ENCODE measurements at regions of chr11 and their contacts with region 1.

Region 1: GRCh38 chr11:108654994-108655631 is 9.8 kb upstream of the DDX10 start:
- DNase-seq: peak; percentile 74
- H3K4me3 Mint-ChIP-seq: no peak overlapping the region
- H3K27ac Mint-ChIP-seq: no peak overlapping the region
- H3K4me1 Mint-ChIP-seq: no peaks in the 10 kb centered on the region
- H3K27me3 Mint-ChIP-seq: no peaks in the 10 kb centered on the region
- CTCF ChIP-seq: peak; percentile 79

Region 2: DNA sequence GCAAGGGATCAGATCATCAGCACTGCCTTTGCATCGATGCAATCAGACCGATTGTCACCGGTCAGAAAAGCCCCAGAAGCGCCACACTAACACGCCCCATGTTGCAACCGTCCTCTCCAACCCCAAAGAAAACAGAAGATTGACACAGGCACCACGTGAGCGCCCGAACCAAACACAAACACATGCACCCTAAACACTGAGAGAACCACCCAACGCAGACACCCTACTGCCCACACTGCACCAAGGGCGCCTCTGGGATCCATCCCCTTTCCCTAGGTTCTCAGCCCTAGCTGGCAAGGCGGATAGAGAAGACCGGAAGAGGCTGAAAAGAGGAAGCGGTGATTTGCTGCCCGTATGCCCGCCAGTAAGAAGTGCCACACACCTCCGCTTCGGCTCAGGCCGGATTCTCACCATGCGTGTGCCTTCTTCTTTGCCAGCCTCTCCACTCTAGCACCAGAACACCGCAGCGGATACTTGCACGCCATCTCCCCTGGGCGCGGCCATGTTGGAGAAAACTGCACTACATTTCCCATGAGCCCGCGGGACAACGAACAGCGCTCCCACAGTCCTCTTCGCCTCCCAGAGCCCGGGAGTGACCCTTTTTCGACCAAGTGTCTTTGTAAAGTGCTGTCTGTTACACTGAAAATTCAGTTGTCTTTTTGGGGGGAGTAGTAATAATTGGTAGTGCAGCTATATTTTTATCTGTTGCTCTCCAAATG is 1089.7 kb before region 1 on chr11 and contains the start of gene ALKBH8:
- CTCF ChIA-PET with region 1: no interaction called
- POLR2A ChIA-PET with region 1: no interaction called
- intact Hi-C with region 1: loop called (anchors 5 kb)
- DNase-seq: peak; percentile 72
- H3K4me3 Mint-ChIP-seq: peak within 1 kb of the TSS; percentile 83
- H3K27ac Mint-ChIP-seq: peak within 1 kb of the TSS; percentile 82
- H3K4me1 Mint-ChIP-seq: peaks cover 23% of the 10 kb centered on the region
- H3K27me3 Mint-ChIP-seq: no peaks in the 10 kb centered on the region
- CTCF ChIP-seq: no peak
- total RNA-seq, gene ALKBH8: 5.1 and 7.3 TPM in 2 replicates

Region 3: GRCh38 chr11:107999759-108000455 is 655.2 kb before region 1 on chr11:
- CTCF ChIA-PET with region 1: no interaction called
- POLR2A ChIA-PET with region 1: no interaction called
- intact Hi-C with region 1: loop called (anchors 5 kb)
- DNase-seq: peak; percentile 61
- H3K4me3 Mint-ChIP-seq: no peak overlapping the region
- H3K27ac Mint-ChIP-seq: no peak overlapping the region
- H3K4me1 Mint-ChIP-seq: peaks cover 5% of the 10 kb centered on the region
- H3K27me3 Mint-ChIP-seq: peaks cover 16% of the 10 kb centered on the region
- CTCF ChIP-seq: no peak

Region 4: DNA sequence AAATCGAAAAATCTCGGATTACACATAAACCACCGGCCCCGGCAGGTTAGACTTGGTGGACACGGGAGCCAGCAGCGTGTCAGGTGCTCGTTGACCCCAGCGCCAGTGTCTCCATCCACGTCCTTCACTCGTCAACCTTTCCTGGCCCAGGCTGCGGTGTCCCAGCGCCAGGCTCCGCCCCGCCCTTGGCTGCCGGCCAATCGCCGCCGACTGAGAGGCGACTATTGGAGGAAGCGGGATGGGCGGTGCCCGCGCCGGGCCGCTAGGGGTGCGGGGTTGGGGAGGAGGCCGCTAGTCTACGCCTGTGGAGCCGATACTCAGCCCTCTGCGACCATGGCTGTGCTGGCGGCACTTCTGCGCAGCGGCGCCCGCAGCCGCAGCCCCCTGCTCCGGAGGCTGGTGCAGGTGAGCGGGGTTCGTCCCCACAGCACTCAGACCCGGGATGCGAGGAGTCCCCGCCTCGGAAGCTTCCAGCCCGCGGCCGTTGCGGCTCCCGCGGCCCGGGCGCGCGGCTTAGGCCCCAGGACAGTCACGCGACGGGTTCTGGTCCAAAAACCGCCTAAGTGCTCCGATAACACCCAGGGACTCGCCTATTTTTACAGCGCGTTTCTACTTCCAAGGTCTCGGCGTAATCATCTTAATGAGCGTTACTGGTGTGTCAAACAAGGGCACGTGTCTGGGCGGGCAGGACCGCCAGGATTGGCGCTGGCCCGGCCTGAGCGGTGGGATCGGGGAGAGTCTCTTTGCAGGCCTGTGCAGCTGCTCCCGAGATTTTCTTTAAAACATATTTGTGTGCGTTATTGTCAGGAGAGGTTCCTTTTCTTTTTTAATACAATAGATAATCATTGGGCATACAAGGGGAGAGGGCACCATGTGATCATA is 533.6 kb before region 1 on chr11 and contains the start of gene ACAT1:
- CTCF ChIA-PET with region 1: interaction called, 4 read pairs
- POLR2A ChIA-PET with region 1: interaction called, 4 read pairs
- intact Hi-C with region 1: loop called (anchors 2 kb)
- DNase-seq: peak; percentile 95
- H3K4me3 Mint-ChIP-seq: peak within 1 kb of the TSS; percentile 83
- H3K27ac Mint-ChIP-seq: peak within 1 kb of the TSS; percentile 91
- H3K4me1 Mint-ChIP-seq: peaks cover 38% of the 10 kb centered on the region
- H3K27me3 Mint-ChIP-seq: no peaks in the 10 kb centered on the region
- CTCF ChIP-seq: peak; percentile 7
- total RNA-seq, gene ACAT1: 75.5 and 86.8 TPM in 2 replicates

Region 5: GRCh38 chr11:108302121-108302785 is 352.9 kb before region 1 on chr11:
- CTCF ChIA-PET with region 1: interaction called, 3 read pairs
- POLR2A ChIA-PET with region 1: no interaction called
- intact Hi-C with region 1: loop called (anchors 5 kb)
- DNase-seq: peak; percentile 33
- H3K4me3 Mint-ChIP-seq: no peak overlapping the region
- H3K27ac Mint-ChIP-seq: peak overlapping the region; percentile 12
- H3K4me1 Mint-ChIP-seq: no peaks in the 10 kb centered on the region
- H3K27me3 Mint-ChIP-seq: no peaks in the 10 kb centered on the region
- CTCF ChIP-seq: no peak

Region 6: DNA sequence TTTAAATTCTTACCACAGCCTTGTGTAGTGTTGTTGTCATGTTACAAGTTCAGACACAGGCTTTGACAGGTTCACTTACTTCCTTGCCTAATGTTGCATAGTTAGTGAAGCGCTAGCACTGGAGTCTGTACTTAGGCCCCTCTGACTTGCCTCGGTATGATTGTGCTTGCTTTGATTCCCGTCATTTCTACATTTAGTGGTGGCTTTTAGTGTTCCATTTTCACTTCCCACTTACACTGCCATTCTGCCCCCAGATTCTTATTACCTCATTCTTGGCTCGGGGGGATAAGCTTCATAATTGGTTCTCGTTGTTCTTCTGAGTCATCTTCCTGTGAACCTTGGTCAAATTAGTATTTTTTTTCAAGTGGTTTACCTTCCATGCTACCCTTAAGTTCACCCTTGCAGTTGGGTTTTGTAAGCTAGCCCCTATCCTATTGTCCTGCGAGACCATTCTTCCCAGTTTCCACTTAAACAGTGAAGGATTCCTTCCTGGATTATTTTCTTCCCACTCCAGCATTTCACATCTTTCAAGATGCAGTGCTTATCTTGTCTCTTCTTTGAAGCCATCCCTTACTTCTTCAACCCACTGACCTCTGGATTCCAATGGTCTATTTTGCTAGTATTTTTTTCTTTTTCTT is 78.5 kb after region 1 on chr11:
- CTCF ChIA-PET with region 1: no interaction called
- POLR2A ChIA-PET with region 1: no interaction called
- intact Hi-C with region 1: no loop called
- DNase-seq: peak; percentile 68
- H3K4me3 Mint-ChIP-seq: no peak overlapping the region
- H3K27ac Mint-ChIP-seq: no peak overlapping the region
- H3K4me1 Mint-ChIP-seq: peaks cover 18% of the 10 kb centered on the region
- H3K27me3 Mint-ChIP-seq: no peaks in the 10 kb centered on the region
- CTCF ChIP-seq: no peak

Measured in MCF 10A (cell line).